CD4-positive, alpha-beta T cell (primary cell): ENCODE measurements at regions of chr17 and their contacts with region 1.

Region 1: GRCh38 chr17:7627250-7628121 is at the start of gene SAT2:
- DNase-seq: peak; percentile 66 to 93 (median 81)
- ATAC-seq: peak; percentile 84
- H3K4me3 ChIP-seq: peak within 1 kb of the TSS; percentile 95
- H3K4me3 Mint-ChIP-seq: peak within 1 kb of the TSS; percentile 95
- H3K27ac ChIP-seq: peak within 1 kb of the TSS; percentile 67 to 72
- H3K27ac Mint-ChIP-seq: peak within 1 kb of the TSS; percentile 82
- H3K4me1 ChIP-seq: peaks cover 21% of the 10 kb centered on the region
- H3K4me1 Mint-ChIP-seq: peaks cover 20% of the 10 kb centered on the region
- H3K27me3 ChIP-seq: no peaks in the 10 kb centered on the region
- H3K27me3 Mint-ChIP-seq: no peaks in the 10 kb centered on the region
- CTCF ChIP-seq: no peak
- total RNA-seq, gene SAT2: 55.7 to 60.3 TPM

Region 2: DNA sequence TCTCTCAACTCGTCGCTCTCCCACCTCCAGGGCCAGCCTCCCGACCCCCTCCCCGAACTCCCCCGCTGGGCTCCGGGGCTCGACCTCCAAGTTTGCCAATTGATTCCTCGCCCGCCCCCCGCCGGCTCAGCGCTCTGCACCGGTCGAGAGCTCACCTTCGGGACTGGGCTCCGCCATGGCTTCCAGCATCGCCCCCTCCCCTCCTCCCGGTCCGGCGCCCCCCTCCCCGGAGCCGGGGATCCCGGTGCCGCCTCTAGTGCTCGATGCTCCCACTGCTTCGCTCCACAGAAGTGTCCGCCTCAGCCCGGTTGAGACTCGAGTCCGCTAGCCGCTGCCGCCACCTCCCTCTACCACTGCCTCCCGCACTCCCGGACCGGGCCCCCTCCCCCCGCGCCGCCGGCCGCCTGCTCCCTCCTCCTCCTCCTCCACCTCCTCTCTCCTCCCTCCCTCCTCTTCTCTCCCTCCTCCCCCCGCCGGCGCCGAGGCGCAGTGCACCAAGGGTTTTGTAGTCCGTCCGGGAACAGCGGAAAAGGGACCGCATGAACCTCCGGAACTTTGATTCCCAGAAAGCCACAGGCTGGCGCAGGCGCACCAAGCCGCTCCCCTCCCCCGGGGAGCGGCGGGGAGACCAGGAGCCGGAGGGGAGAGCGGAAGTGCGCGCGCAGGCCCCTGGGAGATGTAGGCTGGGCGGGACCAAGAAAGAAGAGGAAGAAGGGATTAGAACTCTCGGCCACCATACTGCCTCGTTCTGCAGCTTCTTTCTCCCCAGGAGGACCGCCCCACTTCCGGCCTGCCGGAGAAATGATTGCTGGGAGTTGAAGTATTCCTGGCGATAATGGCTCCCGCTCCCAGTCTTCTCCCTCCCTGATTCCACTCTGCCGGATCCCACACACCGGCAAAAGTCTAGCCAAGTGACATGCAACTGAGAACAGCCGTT is 388.1 kb before region 1 on chr17 and contains the start of gene PHF23:
- CTCF ChIA-PET with region 1: no interaction called
- POLR2A ChIA-PET with region 1: no interaction called
- intact Hi-C with region 1: no loop called
- DNase-seq: peak; percentile 92 to 99 (median 97)
- ATAC-seq: peak; percentile 66
- H3K4me3 ChIP-seq: peak within 1 kb of the TSS; percentile 93
- H3K4me3 Mint-ChIP-seq: peak within 1 kb of the TSS; percentile 94
- H3K27ac ChIP-seq: peak within 1 kb of the TSS; percentile 88
- H3K27ac Mint-ChIP-seq: peak within 1 kb of the TSS; percentile 93
- H3K4me1 ChIP-seq: peaks cover 63% of the 10 kb centered on the region
- H3K4me1 Mint-ChIP-seq: peaks cover 58% of the 10 kb centered on the region
- H3K27me3 ChIP-seq: no peaks in the 10 kb centered on the region
- H3K27me3 Mint-ChIP-seq: peaks cover 4% of the 10 kb centered on the region
- CTCF ChIP-seq: no peak
- total RNA-seq, gene PHF23: 4.5 to 5.1 TPM

Region 3: DNA sequence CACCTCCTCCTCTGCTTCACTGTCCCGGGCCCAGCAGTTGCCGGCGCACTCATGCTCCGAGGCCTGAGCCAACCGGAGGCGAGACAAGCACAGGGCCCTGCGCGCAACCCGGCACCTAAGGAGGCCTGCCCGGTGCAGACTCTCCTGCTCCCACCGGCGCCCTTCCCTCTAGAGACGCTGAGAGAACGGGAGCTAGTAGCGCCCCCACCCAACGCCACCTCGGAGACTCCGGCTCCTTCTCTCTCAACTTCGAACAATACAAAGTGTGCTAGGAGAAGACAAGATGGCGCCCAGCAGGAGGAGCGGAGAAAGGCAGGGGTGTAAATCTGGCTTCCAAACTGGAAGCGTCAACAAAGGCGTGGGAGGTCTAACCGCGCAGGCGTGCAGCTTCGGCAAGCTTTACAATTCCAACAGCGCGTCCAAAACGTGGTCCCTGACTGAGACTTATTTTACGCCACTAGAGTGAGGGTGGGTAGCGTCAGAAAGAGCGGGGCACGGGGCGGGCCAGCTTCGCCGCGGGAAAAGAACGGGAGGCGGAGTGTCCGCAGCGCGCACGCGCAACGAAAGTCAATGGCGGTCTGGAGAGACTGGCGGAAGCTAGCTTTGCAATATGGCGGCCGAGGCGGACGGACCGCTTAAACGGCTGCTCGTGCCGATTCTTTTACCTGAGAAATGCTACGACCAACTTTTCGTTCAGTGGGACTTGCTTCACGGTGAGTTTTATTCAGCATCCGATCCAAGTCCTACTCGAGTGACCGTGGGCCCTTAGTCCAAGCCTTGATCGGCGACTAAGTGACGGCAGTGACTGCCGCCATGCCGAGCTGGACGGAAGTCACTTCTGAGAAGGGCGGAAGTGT is 44.0 kb before region 1 on chr17 and contains the start of gene MPDU1:
- CTCF ChIA-PET with region 1: interaction called, 3 read pairs
- POLR2A ChIA-PET with region 1: interaction called, 22 read pairs
- intact Hi-C with region 1: no loop called
- DNase-seq: peak; percentile 89 to 98 (median 94)
- ATAC-seq: peak; percentile 85
- H3K4me3 ChIP-seq: peak within 1 kb of the TSS; percentile 86
- H3K4me3 Mint-ChIP-seq: peak within 1 kb of the TSS; percentile 98
- H3K27ac ChIP-seq: peak within 1 kb of the TSS; percentile 78 to 98
- H3K27ac Mint-ChIP-seq: peak within 1 kb of the TSS; percentile 98
- H3K4me1 ChIP-seq: peaks cover 56% of the 10 kb centered on the region
- H3K4me1 Mint-ChIP-seq: peaks cover 52% of the 10 kb centered on the region
- H3K27me3 ChIP-seq: no peaks in the 10 kb centered on the region
- H3K27me3 Mint-ChIP-seq: no peaks in the 10 kb centered on the region
- CTCF ChIP-seq: no peak
- total RNA-seq, gene MPDU1: 12.0 to 12.9 TPM

Region 4: GRCh38 chr17:7650509-7651096 is 23.1 kb after region 1 on chr17 and contains the start of gene ATP1B2:
- CTCF ChIA-PET with region 1: interaction called, 7 read pairs
- POLR2A ChIA-PET with region 1: interaction called, 18 read pairs
- intact Hi-C with region 1: no loop called
- DNase-seq: peak; percentile 56 to 88 (median 69)
- ATAC-seq: peak; percentile 94
- H3K4me3 ChIP-seq: peak within 1 kb of the TSS; percentile 52
- H3K4me3 Mint-ChIP-seq: peak within 1 kb of the TSS; percentile 85
- H3K27ac ChIP-seq: no peak within 1 kb of the TSS
- H3K27ac Mint-ChIP-seq: no peak within 1 kb of the TSS
- H3K4me1 ChIP-seq: peaks cover 23% of the 10 kb centered on the region
- H3K4me1 Mint-ChIP-seq: peaks cover 22% of the 10 kb centered on the region
- H3K27me3 ChIP-seq: peaks cover 27 to 43% of the 10 kb centered on the region in 2 experiments
- H3K27me3 Mint-ChIP-seq: peaks cover 62% of the 10 kb centered on the region
- CTCF ChIP-seq: no peak
- total RNA-seq, gene ATP1B2: 0.17 to 0.69 TPM

Region 5: DNA sequence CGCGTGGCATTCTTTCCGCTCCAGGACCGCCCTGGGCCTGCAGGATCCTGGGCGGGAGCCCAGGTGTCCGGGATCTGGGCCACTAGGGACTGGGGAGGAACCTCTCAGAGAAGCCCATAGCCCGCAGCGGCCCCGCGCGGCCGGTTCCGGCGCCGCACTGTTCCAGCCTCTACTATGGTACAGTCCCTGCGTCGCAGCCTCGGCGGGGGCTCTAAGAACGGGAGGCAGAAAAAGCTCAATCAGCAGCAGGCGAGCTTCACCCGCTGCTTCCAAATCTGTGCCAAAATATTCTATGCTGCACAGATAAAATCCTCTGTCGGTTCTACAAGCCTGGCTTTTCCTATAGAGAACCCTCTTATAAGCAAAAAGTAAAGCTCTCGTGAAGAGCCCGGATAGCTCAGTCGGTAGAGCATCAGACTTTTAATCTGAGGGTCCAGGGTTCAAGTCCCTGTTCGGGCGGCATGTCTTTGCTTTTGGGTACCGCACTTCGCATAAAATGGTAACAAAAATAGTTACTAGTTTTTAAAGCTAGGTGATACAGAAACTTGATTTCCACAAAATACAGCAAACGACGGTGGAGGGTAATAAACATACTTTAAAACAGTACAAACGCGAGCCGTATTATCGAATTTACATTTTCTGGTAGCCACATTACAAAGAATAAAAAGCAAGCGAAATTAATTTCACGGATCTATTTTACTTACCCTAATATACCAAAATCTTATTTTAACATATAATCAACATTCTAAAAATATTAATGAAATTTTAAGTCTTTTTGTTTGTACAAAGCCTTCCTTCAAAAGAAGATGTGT is 491.5 kb after region 1 on chr17:
- CTCF ChIA-PET with region 1: no interaction called
- POLR2A ChIA-PET with region 1: no interaction called
- intact Hi-C with region 1: no loop called
- DNase-seq: peak; percentile 75 to 92 (median 81)
- ATAC-seq: peak; percentile 60
- H3K4me3 ChIP-seq: peak overlapping the region; percentile 57
- H3K4me3 Mint-ChIP-seq: peak overlapping the region; percentile 99
- H3K27ac ChIP-seq: peak overlapping the region; percentile 7 to 50
- H3K27ac Mint-ChIP-seq: peak overlapping the region; percentile 100
- H3K4me1 ChIP-seq: peaks cover 65% of the 10 kb centered on the region
- H3K4me1 Mint-ChIP-seq: peaks cover 53% of the 10 kb centered on the region
- H3K27me3 ChIP-seq: peaks cover 45 to 53% of the 10 kb centered on the region in 2 experiments
- H3K27me3 Mint-ChIP-seq: peaks cover 66% of the 10 kb centered on the region
- CTCF ChIP-seq: peak; percentile 81